WTC11 (cell line): ENCODE measurements at regions of chr19 and their contacts with region 1.

Region 1: DNA sequence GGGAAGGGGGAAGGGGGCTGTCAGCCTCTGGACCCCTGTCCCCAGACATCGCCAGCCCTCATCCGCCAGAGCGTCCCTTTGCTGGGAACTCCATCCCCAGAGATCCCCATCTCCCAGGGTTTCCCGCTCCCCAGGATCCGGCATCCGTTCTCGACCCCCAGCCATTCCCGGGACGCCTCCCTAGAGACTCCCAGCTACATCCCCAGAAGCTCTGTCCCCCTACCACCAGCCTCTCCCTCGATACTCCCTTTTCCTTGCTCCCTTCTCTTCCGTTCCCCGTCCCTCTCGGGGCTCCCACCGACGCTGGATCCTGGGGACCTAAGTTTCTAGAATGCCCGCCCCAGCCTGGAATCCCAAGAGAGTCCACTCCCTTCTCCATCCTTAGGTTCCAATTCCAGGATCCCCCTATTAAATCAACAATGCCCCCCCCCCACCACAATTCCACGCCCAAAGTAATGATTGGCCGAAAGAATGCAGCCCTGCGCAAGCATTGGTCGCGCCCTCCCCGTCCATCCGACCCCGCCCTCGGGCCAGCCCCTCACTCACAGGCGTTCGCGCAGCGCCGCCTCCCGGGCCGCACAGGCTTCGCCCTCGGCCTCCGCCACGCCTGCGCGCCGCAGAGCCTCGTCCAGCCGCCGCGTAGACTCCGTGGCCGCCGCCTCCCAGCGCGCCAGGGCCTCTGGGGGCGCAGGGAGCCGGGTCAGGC is 3.2 kb downstream of the CCDC194 start:
- DNase-seq: peak; percentile 98
- ATAC-seq: peak; percentile 93
- H3K4me3 Mint-ChIP-seq: peak overlapping the region; percentile 98
- H3K27ac Mint-ChIP-seq: peak overlapping the region; percentile 95
- H3K4me1 Mint-ChIP-seq: peaks cover 13% of the 10 kb centered on the region
- H3K27me3 Mint-ChIP-seq: peaks cover 25% of the 10 kb centered on the region
- CTCF ChIP-seq: no peak

Region 2: GRCh38 chr19:17183858-17184321 is 206.9 kb before region 1 on chr19:
- CTCF ChIA-PET with region 1: no interaction called
- POLR2A ChIA-PET with region 1: no interaction called
- DNase-seq: no peak
- ATAC-seq: no peak
- H3K4me3 Mint-ChIP-seq: no peak overlapping the region
- H3K27ac Mint-ChIP-seq: peak overlapping the region; percentile 31; the same call in 1 of the 2 replicates
- H3K4me1 Mint-ChIP-seq: peaks cover 14% of the 10 kb centered on the region
- H3K27me3 Mint-ChIP-seq: no peaks in the 10 kb centered on the region
- CTCF ChIP-seq: no peak

Region 3: DNA sequence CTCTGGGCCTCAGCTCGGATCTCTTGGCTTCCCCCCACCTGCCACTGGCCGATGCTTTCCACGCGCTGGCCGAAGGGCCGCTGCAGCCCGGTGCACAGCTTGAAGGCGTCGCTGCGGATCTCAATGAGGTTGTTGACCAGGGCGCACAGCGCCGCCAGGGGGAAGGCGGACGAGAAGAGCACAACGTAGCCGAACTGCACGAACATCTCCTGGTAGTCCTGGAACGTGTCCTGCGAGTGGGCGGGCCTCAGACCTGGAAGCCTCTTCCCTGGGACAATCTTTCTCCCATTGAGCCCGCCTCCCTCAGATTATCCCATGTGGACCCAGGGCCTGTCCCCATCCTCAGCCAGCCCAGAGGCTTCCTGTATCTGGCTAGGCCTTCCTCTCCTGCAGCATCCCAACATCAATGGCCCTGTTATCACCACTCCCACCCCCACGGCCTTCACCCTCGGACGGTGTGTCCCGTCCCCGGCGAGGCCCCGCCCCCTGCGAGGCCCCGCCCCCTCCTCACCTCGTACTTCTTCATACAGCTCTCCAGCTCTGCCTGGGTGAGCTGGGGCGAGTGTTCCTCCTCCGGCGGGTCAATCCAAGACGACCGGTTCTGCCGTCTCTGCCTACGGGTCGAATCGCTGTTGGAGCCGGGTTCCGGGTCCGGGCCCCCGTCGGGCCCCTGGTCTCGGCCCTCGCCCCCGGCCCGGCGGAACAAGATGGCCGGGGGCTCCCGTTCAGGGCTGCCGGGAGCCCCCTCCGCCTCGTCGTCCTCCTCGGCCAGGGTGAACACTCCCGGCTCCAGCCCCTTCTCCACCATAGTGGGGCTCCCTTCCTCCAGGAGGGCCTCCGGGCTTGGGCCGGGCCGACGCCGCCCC is 62.9 kb before region 1 on chr19:
- CTCF ChIA-PET with region 1: interaction called, 27 read pairs
- POLR2A ChIA-PET with region 1: interaction called, 5 read pairs
- DNase-seq: peak; percentile 93
- ATAC-seq: peak; percentile 72
- H3K4me3 Mint-ChIP-seq: peak overlapping the region; percentile 84
- H3K27ac Mint-ChIP-seq: peak overlapping the region; percentile 98
- H3K4me1 Mint-ChIP-seq: peaks cover 16% of the 10 kb centered on the region
- H3K27me3 Mint-ChIP-seq: peaks cover 5% of the 10 kb centered on the region
- CTCF ChIP-seq: 0 out of 2 replicates have a peak, but pooled peaks have one; percentile 17

Region 4: GRCh38 chr19:17336872-17337722 is 53.7 kb before region 1 on chr19 and contains the start of gene GTPBP3:
- CTCF ChIA-PET with region 1: interaction called, 27 read pairs
- POLR2A ChIA-PET with region 1: interaction called, 5 read pairs
- DNase-seq: peak; percentile 98
- ATAC-seq: peak; percentile 67
- H3K4me3 Mint-ChIP-seq: peak within 1 kb of the TSS; percentile 99
- H3K27ac Mint-ChIP-seq: peak within 1 kb of the TSS; percentile 99
- H3K4me1 Mint-ChIP-seq: peaks cover 48% of the 10 kb centered on the region
- H3K27me3 Mint-ChIP-seq: peaks cover 2% of the 10 kb centered on the region; the same call in 1 of the 2 replicates
- CTCF ChIP-seq: no peak
- total RNA-seq, gene GTPBP3: 79.1 to 93.0 TPM (median 80.8 TPM) in 3 replicates

Region 5: DNA sequence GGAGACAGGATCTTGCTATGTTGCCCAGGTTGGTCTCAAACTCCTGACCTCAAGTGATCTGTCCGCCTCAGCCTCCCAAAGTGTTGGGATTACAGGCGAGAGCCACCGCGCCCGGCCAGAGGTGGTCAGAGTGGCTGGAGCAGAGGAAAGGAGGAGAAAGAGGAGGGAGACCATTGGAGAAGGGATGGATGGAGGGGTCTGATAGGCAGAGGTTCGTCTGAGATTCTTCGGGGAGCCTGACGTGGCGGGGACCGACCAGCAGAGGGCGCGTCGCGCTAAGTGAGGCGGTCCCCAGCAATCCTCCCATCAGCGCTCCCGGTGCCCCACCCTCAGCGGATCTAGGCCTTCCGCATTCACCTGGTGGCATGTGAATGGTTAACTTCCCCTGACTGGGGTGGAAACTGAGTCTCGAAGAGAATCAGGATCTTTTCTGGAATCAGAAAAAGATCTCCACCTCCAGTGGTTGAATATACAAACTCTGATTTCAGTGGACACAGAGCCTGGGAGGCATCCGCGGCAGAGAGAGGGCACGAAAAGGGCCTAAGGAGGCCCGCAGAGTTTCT is 44.6 kb before region 1 on chr19:
- CTCF ChIA-PET with region 1: interaction called, 24 read pairs
- POLR2A ChIA-PET with region 1: no interaction called
- DNase-seq: peak; percentile 92
- ATAC-seq: peak; percentile 90
- H3K4me3 Mint-ChIP-seq: no peak overlapping the region
- H3K27ac Mint-ChIP-seq: peak overlapping the region; percentile 90
- H3K4me1 Mint-ChIP-seq: peaks cover 20% of the 10 kb centered on the region
- H3K27me3 Mint-ChIP-seq: no peaks in the 10 kb centered on the region; the same call in 1 of the 2 replicates
- CTCF ChIP-seq: peak; percentile 96

Region 6: GRCh38 chr19:17358395-17358794 is 32.4 kb before region 1 on chr19:
- CTCF ChIA-PET with region 1: interaction called, 12 read pairs
- POLR2A ChIA-PET with region 1: no interaction called
- DNase-seq: no peak
- ATAC-seq: no peak
- H3K4me3 Mint-ChIP-seq: no peak overlapping the region
- H3K27ac Mint-ChIP-seq: no peak overlapping the region
- H3K4me1 Mint-ChIP-seq: peaks cover 1% of the 10 kb centered on the region; the same call in 1 of the 2 replicates
- H3K27me3 Mint-ChIP-seq: peaks cover 3% of the 10 kb centered on the region; the same call in 1 of the 2 replicates
- CTCF ChIP-seq: no peak

Region 7: GRCh38 chr19:17419621-17420466 is 29.0 kb after region 1 on chr19 and contains the start of gene MVB12A:
- CTCF ChIA-PET with region 1: interaction called, 17 read pairs
- POLR2A ChIA-PET with region 1: interaction called, 3 read pairs
- DNase-seq: peak; percentile 97
- ATAC-seq: peak; percentile 87
- H3K4me3 Mint-ChIP-seq: peak within 1 kb of the TSS; percentile 83
- H3K27ac Mint-ChIP-seq: peak within 1 kb of the TSS; percentile 99
- H3K4me1 Mint-ChIP-seq: peaks cover 41% of the 10 kb centered on the region
- H3K27me3 Mint-ChIP-seq: peaks cover 23% of the 10 kb centered on the region
- CTCF ChIP-seq: no peak
- total RNA-seq, gene MVB12A: 58.7 to 78.6 TPM (median 70.8 TPM) in 3 replicates

Region 8: DNA sequence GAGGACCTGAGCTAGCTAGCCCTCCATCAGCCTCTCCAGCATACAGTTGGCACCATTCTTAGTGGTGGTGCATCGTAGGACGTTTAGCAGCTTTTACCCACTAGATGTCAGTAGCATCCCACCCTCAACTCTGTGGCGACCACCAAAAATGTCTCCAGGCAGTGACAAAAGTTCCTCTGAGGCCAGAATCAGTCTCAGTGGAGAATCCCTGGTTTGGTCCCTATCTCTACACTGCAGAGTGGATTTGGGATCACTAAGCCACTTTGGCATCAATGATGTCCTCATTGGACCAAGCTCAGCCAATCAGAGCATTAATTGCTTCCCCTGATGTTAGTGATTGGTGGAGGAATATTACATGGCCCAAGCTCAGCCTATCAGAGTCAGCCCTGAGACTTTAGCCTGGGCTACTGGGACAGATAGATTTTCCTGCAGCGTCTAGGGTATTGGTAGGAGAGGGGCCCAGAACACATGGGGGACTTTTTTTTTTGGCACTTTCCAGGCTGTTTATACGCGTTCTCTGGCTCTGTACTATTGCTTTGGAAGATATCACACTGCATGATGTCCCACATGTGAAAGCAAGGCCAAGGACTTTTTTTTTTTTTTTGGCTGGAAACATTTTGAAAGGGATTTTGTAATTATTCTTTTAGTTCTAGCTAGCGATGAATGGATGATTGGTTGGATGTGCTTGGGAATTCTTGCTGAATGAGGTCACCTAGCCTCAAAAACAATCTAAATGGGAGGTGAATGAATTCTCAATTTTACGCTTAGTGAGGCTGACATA is 50.6 kb after region 1 on chr19:
- CTCF ChIA-PET with region 1: interaction called, 10 read pairs
- POLR2A ChIA-PET with region 1: no interaction called
- DNase-seq: peak; percentile 41
- ATAC-seq: peak; percentile 88
- H3K4me3 Mint-ChIP-seq: no peak overlapping the region
- H3K27ac Mint-ChIP-seq: no peak overlapping the region
- H3K4me1 Mint-ChIP-seq: no peaks in the 10 kb centered on the region
- H3K27me3 Mint-ChIP-seq: peaks cover 8% of the 10 kb centered on the region
- CTCF ChIP-seq: no peak; the same call in 1 of the 2 replicates

Region 9: DNA sequence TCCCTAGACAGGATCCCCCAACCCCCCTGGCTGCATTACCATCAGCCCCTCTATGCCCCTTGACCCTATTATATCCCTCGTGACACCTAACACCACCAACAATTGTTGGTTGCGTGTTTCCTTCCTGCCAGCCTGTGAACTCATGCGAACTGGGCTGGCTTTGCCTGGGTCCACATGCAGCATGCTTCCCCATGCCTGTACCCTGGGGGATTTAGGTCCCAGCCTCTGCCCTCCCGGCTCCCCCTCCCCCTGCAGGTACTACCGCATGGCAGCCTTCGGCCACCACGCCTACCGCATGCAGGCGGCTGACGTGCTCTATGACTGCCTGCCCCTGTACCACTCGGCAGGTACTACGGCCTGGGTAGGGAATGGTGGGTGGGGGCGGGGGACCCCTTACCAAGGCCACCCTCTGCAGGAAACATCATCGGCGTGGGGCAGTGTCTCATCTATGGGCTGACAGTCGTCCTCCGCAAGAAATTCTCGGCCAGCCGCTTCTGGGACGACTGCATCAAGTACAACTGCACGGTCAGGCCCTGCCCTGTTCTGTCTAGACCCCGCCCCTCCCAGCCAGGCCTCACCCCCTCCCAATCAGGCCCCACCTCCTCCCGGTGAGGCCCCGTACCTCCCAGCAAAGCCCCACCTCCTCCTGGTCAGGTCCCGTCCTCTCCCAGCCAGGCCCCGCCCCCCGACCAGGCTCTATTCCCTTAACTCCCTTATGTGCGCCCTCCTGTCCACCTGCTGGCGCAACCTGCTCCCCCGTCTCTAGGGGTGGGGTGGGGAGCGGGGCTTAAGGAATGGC is 98.0 kb after region 1 on chr19:
- CTCF ChIA-PET with region 1: no interaction called
- POLR2A ChIA-PET with region 1: no interaction called
- DNase-seq: peak; percentile 99
- ATAC-seq: peak; percentile 96
- H3K4me3 Mint-ChIP-seq: peak overlapping the region; percentile 78
- H3K27ac Mint-ChIP-seq: peak overlapping the region; percentile 77
- H3K4me1 Mint-ChIP-seq: peaks cover 21% of the 10 kb centered on the region
- H3K27me3 Mint-ChIP-seq: peaks cover 9% of the 10 kb centered on the region; the same call in 1 of the 2 replicates
- CTCF ChIP-seq: peak; percentile 30; the same call in 1 of the 2 replicates

Region 10: GRCh38 chr19:17505223-17505622 is 114.4 kb after region 1 on chr19:
- CTCF ChIA-PET with region 1: no interaction called
- POLR2A ChIA-PET with region 1: no interaction called
- DNase-seq: no peak
- ATAC-seq: no peak
- H3K4me3 Mint-ChIP-seq: no peak overlapping the region
- H3K27ac Mint-ChIP-seq: no peak overlapping the region
- H3K4me1 Mint-ChIP-seq: peaks cover 2% of the 10 kb centered on the region
- H3K27me3 Mint-ChIP-seq: no peaks in the 10 kb centered on the region
- CTCF ChIP-seq: no peak